RWPE1 (cell line): ENCODE measurements at regions of chr13 and their contacts with region 1.

Region 1: GRCh38 chr13:65479692-65480091 is 1750.4 kb downstream of the PCDH9 start:
- DNase-seq: no peak
- H3K27ac ChIP-seq: no peak overlapping the region
- CTCF ChIP-seq: no peak

Region 2: DNA sequence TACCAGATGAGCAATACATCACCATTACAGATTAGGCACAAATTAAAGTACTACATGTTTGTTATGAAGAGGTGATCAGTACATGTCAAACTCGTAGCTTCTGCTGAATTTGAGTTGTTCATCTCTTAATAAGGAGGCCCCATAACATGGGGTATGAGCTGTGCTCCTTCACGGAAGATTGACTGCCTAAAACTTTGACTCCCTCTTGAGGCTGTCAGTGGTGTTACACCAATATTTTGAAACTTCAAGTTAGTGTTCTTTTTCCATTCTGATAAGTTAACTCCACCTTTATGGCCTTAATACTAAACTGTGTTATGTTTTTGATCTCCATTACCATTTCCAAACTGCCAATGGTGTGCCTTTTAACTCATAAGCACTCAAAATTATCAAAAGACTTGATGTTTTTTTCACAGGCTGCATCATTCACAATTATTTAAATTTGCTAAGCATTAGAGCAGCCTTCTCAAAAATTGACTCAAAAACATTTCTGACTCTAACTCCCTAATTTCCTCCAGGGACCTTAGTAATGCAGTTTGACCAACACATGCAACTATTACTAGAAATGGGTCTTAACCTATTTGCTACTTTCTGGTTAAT is 159.0 kb after region 1 on chr13:
- CTCF ChIA-PET with region 1: no interaction called
- POLR2A ChIA-PET with region 1: interaction called, 13 read pairs
- DNase-seq: peak; percentile 4
- H3K27ac ChIP-seq: no peak overlapping the region
- CTCF ChIP-seq: peak; percentile 65

Region 3: DNA sequence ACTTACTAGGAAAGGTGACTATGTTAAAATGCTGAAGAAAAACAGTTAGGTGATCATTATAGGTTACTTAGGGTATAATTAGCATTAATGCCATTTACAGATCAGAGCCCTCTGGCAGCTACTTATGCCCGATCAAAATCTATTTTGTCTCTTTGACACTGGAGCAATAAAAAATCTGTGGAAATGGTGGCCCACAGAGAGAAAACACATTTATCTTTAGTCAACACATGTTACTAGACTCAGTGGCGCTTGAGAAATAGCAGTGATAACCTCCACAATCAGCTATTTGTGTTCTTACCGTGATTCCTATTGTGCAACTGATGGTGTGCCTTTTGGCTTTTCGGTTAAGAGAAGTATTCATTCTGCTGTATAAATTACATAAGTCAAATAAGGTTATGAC is 230.8 kb after region 1 on chr13:
- CTCF ChIA-PET with region 1: no interaction called
- POLR2A ChIA-PET with region 1: no interaction called
- DNase-seq: no peak
- H3K27ac ChIP-seq: no peak overlapping the region
- CTCF ChIP-seq: no peak